B cell (primary cell): ENCODE measurements at regions of chr9 and their contacts with region 1.

Region 1: DNA sequence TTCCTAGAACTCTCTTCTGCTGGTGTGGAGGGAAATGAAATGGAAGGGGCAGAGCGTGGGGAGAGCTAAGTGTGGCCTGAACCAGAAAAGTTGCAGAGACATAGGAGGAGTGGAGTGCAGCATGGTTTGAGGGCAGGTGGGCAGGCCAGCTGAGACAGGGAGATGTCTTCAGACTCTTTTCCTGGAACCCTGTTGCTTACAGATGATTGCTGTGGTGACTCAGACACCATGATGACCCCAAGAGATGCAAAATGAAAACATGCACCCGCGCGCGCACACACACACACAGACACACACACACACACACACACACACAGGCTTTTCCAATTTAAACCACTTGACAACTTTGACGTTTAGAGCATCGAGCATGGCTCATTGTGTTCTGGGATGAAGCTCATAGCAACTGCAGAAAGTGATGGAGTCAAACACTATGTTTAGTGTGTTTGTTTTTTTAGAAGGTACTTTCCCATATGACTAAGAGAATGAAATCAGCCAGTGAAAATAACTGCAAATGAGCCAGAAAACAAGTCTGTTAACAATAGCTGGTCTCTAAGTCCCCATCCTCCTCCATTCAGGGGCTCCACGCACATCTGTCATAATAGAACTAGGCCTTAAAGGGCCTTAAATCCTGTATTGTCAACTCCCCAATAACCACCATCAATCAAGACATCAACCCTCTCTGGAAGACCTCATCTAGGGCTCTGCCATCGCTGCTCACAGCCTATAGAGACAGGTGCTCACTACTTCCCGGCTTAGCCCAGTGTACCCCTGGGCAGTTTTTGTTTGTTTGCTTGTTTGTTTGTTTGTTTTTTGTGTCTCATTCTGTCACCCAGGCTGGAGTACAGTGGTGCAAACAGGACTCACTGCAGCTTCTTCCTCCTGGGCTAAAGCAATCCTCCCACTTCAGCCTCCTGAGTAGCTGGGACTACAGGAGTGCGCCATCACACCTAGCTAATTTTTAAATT is 9.6 kb downstream of the TMOD1 start:
- DNase-seq: peak; percentile 9
- ATAC-seq: peak; percentile 61
- H3K4me3 ChIP-seq: no peak overlapping the region
- H3K4me3 Mint-ChIP-seq: peak overlapping the region; percentile 3
- H3K27ac ChIP-seq: no peak overlapping the region
- H3K27ac Mint-ChIP-seq: peak overlapping the region; percentile 56
- H3K4me1 ChIP-seq: no peaks in the 10 kb centered on the region
- H3K4me1 Mint-ChIP-seq: peaks cover 11% of the 10 kb centered on the region
- H3K27me3 ChIP-seq: peaks cover 0 to 3% (median 0%) of the 10 kb centered on the region in 4 experiments
- H3K27me3 Mint-ChIP-seq: peaks cover 11% of the 10 kb centered on the region
- CTCF ChIP-seq: no peak

Region 2: GRCh38 chr9:97176206-97176605 is 334.9 kb before region 1 on chr9:
- CTCF ChIA-PET with region 1: no interaction called
- POLR2A ChIA-PET with region 1: no interaction called
- intact Hi-C with region 1: no loop called
- DNase-seq: no peak
- ATAC-seq: no peak
- H3K4me3 ChIP-seq: no peak overlapping the region
- H3K4me3 Mint-ChIP-seq: no peak overlapping the region
- H3K27ac ChIP-seq: no peak overlapping the region
- H3K27ac Mint-ChIP-seq: no peak overlapping the region
- H3K4me1 ChIP-seq: no peaks in the 10 kb centered on the region
- H3K4me1 Mint-ChIP-seq: no peaks in the 10 kb centered on the region
- H3K27me3 ChIP-seq: no peaks in the 10 kb centered on the region
- H3K27me3 Mint-ChIP-seq: no peaks in the 10 kb centered on the region
- CTCF ChIP-seq: no peak

Region 3: DNA sequence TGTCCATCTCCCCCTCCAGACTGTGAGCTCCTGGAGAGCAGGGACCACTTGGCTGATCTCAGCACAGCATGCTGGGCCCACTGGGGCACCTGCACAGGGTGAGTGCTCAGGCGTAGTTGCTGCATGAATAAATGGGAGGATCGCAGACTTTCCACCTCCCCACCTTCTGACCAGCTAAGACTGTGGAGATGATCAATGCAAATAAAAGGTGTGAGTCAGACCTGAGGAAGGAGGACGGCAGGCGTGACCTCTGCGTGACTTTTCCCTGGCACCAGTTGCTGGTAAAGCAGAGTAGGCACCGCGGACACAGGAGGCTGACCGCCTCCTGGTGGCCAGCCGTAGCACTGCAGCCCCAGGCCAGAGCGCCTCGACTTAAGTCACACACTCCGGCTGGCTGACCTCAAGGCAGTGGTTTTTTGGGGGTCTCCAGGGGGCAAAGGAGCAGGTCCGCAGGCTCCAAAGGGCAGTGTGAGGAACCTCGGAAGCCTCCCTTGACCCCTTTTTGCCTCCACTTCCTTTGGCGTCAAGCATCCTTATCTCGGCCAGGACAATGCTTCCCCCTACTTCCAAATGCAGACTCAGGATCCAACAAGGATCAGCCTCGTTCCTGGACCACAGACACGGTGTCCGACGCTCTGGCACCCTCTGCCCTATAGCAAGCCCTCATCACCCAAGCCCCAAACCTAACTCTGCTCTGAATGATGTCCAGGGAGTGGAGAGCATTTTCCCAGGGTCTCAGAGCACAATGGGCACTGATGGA is 111.9 kb before region 1 on chr9:
- CTCF ChIA-PET with region 1: no interaction called
- POLR2A ChIA-PET with region 1: no interaction called
- intact Hi-C with region 1: no loop called
- DNase-seq: peak; percentile 77
- ATAC-seq: peak; percentile 90
- H3K4me3 ChIP-seq: no peak overlapping the region
- H3K4me3 Mint-ChIP-seq: no peak overlapping the region
- H3K27ac ChIP-seq: no peak overlapping the region
- H3K27ac Mint-ChIP-seq: no peak overlapping the region
- H3K4me1 ChIP-seq: no peaks in the 10 kb centered on the region
- H3K4me1 Mint-ChIP-seq: no peaks in the 10 kb centered on the region
- H3K27me3 ChIP-seq: peaks cover 0 to 8% (median 0%) of the 10 kb centered on the region in 4 experiments
- H3K27me3 Mint-ChIP-seq: peaks cover 6% of the 10 kb centered on the region
- CTCF ChIP-seq: peak; percentile 98

Region 4: GRCh38 chr9:97529363-97530076 is 18.4 kb after region 1 on chr9:
- CTCF ChIA-PET with region 1: no interaction called
- POLR2A ChIA-PET with region 1: interaction called, 10 read pairs
- intact Hi-C with region 1: no loop called
- DNase-seq: no peak
- ATAC-seq: no peak
- H3K4me3 ChIP-seq: no peak overlapping the region
- H3K4me3 Mint-ChIP-seq: no peak overlapping the region
- H3K27ac ChIP-seq: no peak overlapping the region
- H3K27ac Mint-ChIP-seq: no peak overlapping the region
- H3K4me1 ChIP-seq: no peaks in the 10 kb centered on the region
- H3K4me1 Mint-ChIP-seq: no peaks in the 10 kb centered on the region
- H3K27me3 ChIP-seq: no peaks in the 10 kb centered on the region
- H3K27me3 Mint-ChIP-seq: peaks cover 4% of the 10 kb centered on the region
- CTCF ChIP-seq: no peak